Panc1 (cell line): ENCODE measurements at regions of chr1 and their contacts with region 1.

Region 1: GRCh38 chr1:27816921-27817630 is 13.5 kb upstream of the PPP1R8 start:
- DNase-seq: no peak
- ATAC-seq: peak; percentile 38; the same call in 1 of the 2 replicates
- H3K4me3 ChIP-seq: no peak overlapping the region
- H3K27ac ChIP-seq: no peak overlapping the region
- H3K4me1 ChIP-seq: no peaks in the 10 kb centered on the region
- H3K27me3 ChIP-seq: no peaks in the 10 kb centered on the region
- CTCF ChIP-seq: no peak

Region 2: DNA sequence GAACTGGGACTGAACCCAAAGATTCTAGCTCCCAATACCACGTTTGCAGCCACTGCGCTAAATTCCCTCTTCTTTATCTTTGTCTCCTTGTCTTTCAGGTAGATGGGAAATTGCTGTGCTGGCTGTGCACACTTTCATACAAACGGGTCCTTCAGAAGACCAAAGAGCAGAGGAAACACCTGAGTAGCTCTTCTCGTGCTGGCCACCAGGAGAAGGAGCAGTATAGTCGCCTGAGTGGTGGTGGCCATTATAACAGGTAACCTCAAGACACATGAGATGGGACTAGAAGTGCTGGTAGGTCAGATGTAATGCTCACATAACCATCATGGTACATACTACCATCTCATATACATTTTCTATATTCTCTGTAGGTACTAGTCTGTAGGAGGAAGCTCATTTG is 72.5 kb before region 1 on chr1:
- CTCF ChIA-PET with region 1: no interaction called
- POLR2A ChIA-PET with region 1: no interaction called
- in situ Hi-C with region 1: no loop called
- intact Hi-C with region 1: no loop called
- DNase-seq: no peak
- ATAC-seq: no peak; the same call in 1 of the 2 replicates
- H3K4me3 ChIP-seq: no peak overlapping the region
- H3K27ac ChIP-seq: no peak overlapping the region
- H3K4me1 ChIP-seq: no peaks in the 10 kb centered on the region
- H3K27me3 ChIP-seq: no peaks in the 10 kb centered on the region
- CTCF ChIP-seq: no peak

Region 3: DNA sequence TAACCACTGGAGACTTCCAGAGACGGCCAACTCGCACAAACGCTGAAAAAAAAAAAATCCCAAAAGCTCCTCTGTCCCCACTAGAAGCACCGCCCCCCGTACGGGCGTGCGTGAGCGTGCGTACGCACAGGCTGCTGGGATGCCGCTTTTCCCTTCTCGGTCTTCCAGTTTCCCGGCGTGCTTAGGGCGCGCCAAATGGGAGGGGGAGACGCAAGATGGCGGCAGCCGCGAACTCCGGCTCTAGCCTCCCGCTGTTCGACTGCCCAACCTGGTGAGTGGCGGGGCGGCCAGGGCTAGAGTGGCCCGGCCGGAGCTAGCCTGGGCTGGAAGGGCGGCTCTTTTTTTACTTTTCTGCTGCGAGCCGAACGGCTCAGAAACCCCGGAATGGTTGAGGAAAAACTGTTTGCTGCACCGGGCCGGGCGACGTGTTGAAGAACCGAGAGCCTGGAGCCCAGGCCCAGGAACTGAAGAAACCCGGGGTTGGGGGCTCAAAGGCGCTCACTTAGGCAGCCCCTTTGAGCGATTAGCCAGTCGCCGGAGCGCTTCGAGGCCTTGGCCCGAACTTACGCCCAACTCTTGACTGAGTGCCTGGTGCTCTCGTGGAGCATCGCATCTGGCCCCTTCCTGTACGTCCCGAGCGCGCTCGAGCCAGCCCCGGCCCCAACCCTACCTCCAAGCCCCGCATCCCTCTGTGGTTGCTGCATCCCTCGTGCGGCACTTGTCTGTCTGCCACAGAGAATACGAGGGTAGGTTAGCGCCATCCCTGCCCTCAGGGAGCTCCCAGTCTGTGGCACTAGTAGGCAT is 13.7 kb after region 1 on chr1 and contains the start of gene PPP1R8:
- CTCF ChIA-PET with region 1: interaction called, 12 read pairs
- POLR2A ChIA-PET with region 1: no interaction called
- in situ Hi-C with region 1: no loop called
- intact Hi-C with region 1: no loop called
- DNase-seq: peak; percentile 86
- ATAC-seq: peak; percentile 100
- H3K4me3 ChIP-seq: peak within 1 kb of the TSS; percentile 92 to 95
- H3K27ac ChIP-seq: peak within 1 kb of the TSS; percentile 87
- H3K4me1 ChIP-seq: peaks cover 13% of the 10 kb centered on the region; the same call in 1 of the 2 replicates
- H3K27me3 ChIP-seq: no peaks in the 10 kb centered on the region
- CTCF ChIP-seq: no peak
- total RNA-seq, gene PPP1R8: 59.7 TPM

Region 4: DNA sequence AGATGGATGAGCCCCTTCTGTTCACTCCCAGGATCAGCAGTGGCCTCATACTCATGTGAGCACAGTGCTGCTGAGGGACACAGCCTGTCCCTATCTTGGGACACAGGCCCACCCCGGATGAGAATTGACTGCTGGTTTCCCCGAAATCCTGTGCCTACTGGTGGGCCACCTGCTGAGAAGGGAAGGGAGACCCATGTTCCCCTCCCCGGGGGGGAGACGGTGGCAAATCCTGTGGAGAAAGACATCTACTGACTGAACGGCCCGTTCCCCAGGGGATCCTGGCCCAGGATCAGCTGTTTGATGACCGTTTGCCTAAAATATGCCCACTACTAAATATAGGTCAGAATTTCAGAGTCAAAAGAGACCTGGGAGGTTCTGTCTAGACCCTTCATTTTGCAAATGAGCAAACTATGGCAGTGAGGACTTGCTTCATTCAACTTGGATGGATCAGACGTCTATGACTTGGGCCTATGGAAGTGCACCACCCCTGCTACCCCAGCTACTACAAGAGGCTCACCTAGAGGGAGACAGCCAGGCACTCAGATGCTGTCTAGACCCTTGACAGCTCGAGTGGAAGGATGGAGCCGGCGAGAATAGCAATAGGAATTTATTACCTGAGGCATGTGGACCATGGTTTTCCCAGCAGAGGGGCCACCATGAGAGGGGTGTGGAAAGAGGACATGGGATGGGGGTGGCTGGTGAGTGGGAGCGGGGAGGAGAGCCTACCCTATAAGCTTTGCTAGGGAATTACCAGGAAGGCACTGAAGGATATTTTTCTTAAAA is 39.7 kb after region 1 on chr1:
- CTCF ChIA-PET with region 1: interaction called, 15 read pairs
- POLR2A ChIA-PET with region 1: no interaction called
- in situ Hi-C with region 1: no loop called
- intact Hi-C with region 1: no loop called
- DNase-seq: no peak
- ATAC-seq: no peak
- H3K4me3 ChIP-seq: no peak overlapping the region
- H3K27ac ChIP-seq: no peak overlapping the region
- H3K4me1 ChIP-seq: no peaks in the 10 kb centered on the region
- H3K27me3 ChIP-seq: no peaks in the 10 kb centered on the region
- CTCF ChIP-seq: no peak